Activated CD4-positive, alpha-beta T cell treated with anti-CD3 and anti-CD28 coated beads, Interleukin-2, amount 10 ng/mL, durations not matched to agents 24 days and 14 days (primary cell): ENCODE measurements at regions of chr1 and their contacts with region 1.

Region 1: GRCh38 chr1:36149237-36149972 is at the start of gene TRAPPC3:
- DNase-seq: peak; percentile 100
- H3K4me3 Mint-ChIP-seq: peak within 1 kb of the TSS; percentile 98
- H3K27ac Mint-ChIP-seq: peak within 1 kb of the TSS; percentile 98
- H3K4me1 Mint-ChIP-seq: peaks cover 54% of the 10 kb centered on the region
- H3K27me3 Mint-ChIP-seq: no peaks in the 10 kb centered on the region
- total RNA-seq, gene TRAPPC3: 71.2 and 72.4 TPM in 2 replicates

Region 2: DNA sequence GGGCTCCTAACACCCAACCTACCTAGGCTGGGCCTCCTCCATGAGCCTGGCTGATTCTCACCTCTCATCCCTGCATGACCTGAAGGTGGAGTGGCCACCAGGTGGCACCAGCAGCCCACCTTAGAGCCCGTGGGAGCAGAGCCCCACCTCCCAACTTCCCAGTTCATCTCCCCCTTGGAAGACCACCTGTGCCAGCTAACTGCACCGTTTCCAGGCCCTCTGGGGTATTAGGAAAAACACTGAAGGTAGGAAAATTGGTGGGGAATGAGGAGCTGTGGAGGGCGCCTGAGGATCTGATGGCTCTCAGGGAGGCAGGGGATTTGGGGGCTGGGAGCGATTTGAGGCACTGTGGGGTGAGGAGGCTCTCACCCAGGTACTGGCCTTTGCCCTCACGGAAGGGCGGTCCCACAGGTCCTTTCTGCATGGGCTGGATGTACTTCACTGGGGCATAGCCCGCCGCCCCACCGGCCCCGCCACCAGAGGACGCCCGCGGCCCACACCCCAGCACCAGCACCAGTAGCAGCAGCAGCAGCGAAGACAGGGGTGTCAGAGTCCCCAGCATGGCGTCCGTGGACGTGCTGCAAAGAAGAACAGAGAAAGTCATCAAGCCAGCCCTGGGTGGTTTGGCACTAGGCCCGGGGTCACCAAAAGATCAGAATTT is 49.6 kb before region 1 on chr1:
- intact Hi-C with region 1: loop called (anchors 5 kb)
- DNase-seq: peak; percentile 93
- H3K4me3 Mint-ChIP-seq: no peak overlapping the region
- H3K27ac Mint-ChIP-seq: no peak overlapping the region
- H3K4me1 Mint-ChIP-seq: peaks cover 5% of the 10 kb centered on the region
- H3K27me3 Mint-ChIP-seq: no peaks in the 10 kb centered on the region

Region 3: DNA sequence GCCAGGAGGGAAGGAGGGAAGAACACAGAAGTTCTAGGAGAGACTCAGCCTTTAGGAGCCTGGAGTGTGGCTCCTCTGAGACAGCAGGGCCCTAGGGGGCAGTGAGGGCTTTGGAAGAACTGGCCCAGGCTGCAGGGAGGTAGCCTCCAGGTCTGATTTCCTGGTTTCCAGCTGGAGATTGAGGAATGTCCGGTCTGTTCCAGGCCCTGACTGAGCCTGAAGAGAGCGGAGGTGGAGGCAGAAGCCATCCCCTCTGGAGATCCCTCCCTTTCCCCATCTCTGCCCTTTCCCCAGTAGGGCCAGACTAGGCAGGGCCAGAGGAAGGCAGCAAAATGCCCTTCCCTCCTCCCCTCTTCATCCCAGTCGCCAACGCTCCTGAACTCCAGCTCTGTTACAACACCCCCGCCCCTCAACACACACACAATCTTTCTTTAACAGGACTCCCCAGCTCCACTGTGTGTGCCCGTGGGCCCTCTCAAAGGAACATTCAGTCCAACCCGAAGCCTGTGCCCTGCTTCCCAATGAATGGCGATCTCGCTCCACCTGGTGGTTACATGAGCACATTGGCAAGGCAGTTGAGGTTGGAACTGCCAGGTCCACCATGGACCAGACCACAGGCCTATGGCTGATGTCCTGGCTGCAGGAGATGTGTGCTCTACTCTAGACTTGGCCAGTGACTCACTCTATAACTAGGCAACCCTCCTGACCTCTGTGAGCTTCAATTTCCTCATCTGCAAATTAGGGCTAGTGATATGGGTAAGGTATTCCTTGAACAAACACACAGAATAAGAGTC is 38.6 kb after region 1 on chr1:
- intact Hi-C with region 1: loop called (anchors 1 kb)
- DNase-seq: peak; percentile 94
- H3K4me3 Mint-ChIP-seq: no peak overlapping the region
- H3K27ac Mint-ChIP-seq: peak overlapping the region; percentile 79
- H3K4me1 Mint-ChIP-seq: peaks cover 6% of the 10 kb centered on the region
- H3K27me3 Mint-ChIP-seq: no peaks in the 10 kb centered on the region

Region 4: DNA sequence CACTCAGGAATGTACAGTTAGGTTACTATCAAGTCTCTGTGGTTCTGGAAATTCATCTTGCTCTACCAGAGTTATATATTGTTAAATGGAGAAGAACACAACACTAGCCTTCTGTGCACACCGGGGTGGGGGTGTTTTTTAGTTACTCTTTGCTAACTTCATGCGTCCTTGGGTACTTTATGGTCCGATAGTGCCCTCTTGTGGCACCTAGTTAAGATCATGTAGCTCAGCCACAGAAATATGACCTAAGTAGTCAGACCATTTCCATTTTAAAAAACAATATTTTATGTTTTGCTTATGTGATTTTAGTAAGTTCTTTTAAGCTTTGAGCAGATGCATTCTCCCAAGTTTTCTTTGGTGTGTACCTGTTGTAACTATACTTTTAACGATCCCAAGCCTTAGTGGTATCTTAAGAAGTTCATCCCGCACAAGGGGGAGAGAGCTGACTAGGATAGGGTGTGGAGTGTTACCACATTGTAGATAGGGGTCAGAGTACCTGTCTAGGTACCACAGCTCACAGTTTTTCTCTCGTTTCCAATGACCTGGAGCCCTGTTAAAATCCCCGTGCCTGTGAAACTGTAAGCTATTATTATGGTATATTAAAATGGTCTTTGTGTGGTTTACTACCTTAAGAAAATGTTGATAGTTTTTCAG is 136.2 kb after region 1 on chr1:
- intact Hi-C with region 1: loop called (anchors 1 kb)
- DNase-seq: peak; percentile 90
- H3K4me3 Mint-ChIP-seq: no peak overlapping the region
- H3K27ac Mint-ChIP-seq: peak overlapping the region; percentile 34
- H3K4me1 Mint-ChIP-seq: peaks cover 18% of the 10 kb centered on the region
- H3K27me3 Mint-ChIP-seq: no peaks in the 10 kb centered on the region